ENCODE measurements at regions of chr1 and their contacts with region 1.

Region 1: DNA sequence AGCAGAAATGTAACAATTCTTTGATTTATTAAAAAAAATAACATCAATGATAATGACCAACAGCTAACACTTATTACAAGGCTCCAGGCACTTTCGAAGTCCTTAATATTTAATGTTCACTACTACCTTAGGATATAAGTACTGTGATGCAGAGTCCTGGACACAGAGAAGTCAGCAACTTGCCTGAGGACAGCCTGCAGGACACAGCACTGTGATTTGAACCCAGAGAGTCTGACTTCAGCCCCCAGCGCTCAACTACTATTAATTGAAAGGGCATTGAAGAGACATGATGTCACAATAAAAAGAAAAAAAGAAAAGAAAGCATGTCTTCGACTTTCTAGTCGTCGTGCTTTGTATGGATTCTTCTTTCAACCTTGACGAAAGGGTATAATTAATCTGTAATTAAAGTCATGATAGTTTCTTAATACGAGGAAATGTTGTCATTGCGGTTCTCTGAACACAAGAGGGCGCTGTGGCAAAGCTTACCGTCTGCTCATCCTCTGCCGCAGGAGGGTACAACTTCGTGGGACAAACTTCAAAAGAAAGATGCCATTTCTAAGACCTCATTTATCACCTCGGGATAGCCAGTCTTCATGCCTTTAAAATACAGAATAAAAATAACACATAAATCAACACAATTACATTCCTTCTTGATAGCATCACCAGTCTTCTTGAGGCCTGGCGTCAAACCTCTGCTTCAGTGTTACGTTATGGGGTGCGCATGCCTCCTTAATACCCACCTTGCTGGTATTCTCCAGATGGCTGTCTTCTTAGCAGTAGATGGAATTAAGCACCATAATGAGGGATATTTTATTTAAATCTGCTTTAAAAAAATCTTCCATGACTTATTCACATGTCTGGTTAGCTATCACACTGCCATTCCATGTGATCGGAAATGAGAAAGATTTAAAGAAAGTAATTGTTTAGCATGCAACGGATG is 240.1 kb downstream of the DISC1 start:
- DNase-seq: peak; percentile 38 to 52
- ATAC-seq: peak; percentile 64 to 74; a peak in 5 of 6 replicates
- H3K4me3 ChIP-seq: no peak overlapping the region
- H3K27ac ChIP-seq: peak overlapping the region in 1 of 2 experiments; percentile 38; a peak in 2 of 6 replicates
- H3K4me1 ChIP-seq: no peaks in the 10 kb centered on the region
- CTCF ChIP-seq: peak; percentile 96
- EP300 ChIP-seq: no peak
- POLR2A ChIP-seq: no peak
- RAD21 ChIP-seq: peak; percentile 90 to 93

Region 2: DNA sequence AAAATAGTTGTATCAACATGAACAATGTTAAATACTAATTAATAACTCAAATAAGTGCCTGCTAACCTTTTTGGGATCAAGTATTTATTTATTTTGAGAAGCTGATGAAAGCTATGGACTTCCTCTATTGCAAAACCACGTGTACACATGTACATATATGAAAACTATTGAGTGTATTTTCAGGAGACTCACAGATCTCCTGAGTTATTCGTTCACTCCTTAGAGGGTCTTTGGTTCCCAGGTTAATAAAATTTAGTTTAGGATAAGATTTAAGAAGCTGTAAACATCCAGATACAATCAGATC is 109.6 kb before region 1 on chr1:
- CTCF ChIA-PET with region 1: interaction called, 34 read pairs
- POLR2A ChIA-PET with region 1: no interaction called
- DNase-seq: no peak
- ATAC-seq: peak; percentile 70 to 71; a peak in 4 of 6 replicates
- H3K4me3 ChIP-seq: no peak overlapping the region
- H3K27ac ChIP-seq: peak overlapping the region; percentile 36 to 51; a peak in 4 of 6 replicates
- H3K4me1 ChIP-seq: peaks cover 3% of the 10 kb centered on the region; the same call in 1 of the 3 replicates
- CTCF ChIP-seq: no peak
- EP300 ChIP-seq: no peak
- POLR2A ChIP-seq: no peak
- RAD21 ChIP-seq: peak in 1 of 2 experiments; percentile 1; a peak in 1 of 5 replicates

Region 3: DNA sequence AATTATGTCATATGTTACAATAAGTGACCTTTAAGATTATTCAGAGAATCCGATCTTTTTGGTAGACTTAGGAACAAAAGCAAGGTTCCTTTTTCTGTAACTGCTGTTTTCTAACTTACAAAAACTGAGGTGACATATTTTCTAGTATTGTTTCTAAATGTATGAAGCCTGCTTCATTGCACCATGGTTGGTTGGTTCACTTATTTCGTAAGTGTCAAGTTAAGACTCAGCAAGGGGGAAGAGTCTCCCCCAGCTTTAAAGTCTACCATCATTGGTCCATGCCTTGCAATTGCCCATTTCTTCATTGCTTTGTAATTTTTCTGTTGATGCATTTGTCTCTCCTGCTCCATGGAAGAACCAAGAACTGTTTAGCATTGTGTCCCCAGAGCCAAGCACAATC is 103.2 kb before region 1 on chr1:
- CTCF ChIA-PET with region 1: interaction called, 10 read pairs
- POLR2A ChIA-PET with region 1: no interaction called
- DNase-seq: no peak
- ATAC-seq: no peak
- H3K4me3 ChIP-seq: no peak overlapping the region
- H3K27ac ChIP-seq: no peak overlapping the region
- H3K4me1 ChIP-seq: no peaks in the 10 kb centered on the region
- CTCF ChIP-seq: no peak
- EP300 ChIP-seq: no peak
- POLR2A ChIP-seq: no peak
- RAD21 ChIP-seq: no peak

Region 4: GRCh38 chr1:231844986-231845502 is 21.6 kb before region 1 on chr1:
- CTCF ChIA-PET with region 1: interaction called, 15 read pairs
- POLR2A ChIA-PET with region 1: no interaction called
- DNase-seq: no peak
- ATAC-seq: no peak
- H3K4me3 ChIP-seq: no peak overlapping the region
- H3K27ac ChIP-seq: peak overlapping the region in 1 of 2 experiments; percentile 19; a peak in 1 of 6 replicates
- H3K4me1 ChIP-seq: peaks cover 28% of the 10 kb centered on the region
- CTCF ChIP-seq: 0 out of 3 replicates have a peak, but pooled peaks have one; percentile 8
- EP300 ChIP-seq: no peak
- POLR2A ChIP-seq: no peak
- RAD21 ChIP-seq: no peak

Region 5: DNA sequence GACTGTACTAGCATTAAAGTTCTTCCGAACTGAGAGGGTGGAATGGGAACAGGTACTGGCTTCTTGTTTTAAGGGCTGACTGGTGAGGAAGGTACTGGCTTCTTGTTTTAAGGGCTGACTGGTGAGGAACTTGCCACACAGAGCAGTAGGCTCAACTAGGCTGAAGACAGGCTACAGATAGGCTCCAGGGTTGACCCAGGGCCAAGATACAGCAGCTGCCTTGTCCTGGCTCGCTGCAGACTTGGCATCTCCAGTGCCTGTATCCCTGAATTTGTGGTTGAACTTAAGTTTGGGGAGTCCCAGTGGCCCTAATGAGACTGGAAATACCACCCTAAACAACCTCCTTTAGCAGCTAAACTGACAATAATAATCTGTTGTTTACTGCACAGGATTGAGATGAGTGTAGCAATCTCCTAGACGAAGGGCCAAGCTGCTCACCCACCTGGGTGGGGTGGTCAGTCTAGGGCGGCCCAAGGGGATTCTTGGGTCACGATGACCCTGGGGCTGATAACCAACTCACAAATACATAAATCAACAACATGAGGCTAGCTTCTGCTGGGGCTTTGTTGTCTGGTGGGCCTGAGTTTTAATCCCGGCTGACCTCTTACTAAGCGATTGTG is 13.0 kb before region 1 on chr1:
- CTCF ChIA-PET with region 1: interaction called, 22 read pairs
- POLR2A ChIA-PET with region 1: no interaction called
- DNase-seq: no peak
- ATAC-seq: peak in 1 of 2 experiments; percentile 30; a peak in 1 of 6 replicates
- H3K4me3 ChIP-seq: no peak overlapping the region
- H3K27ac ChIP-seq: no peak overlapping the region
- H3K4me1 ChIP-seq: no peaks in the 10 kb centered on the region
- CTCF ChIP-seq: no peak
- EP300 ChIP-seq: no peak
- POLR2A ChIP-seq: no peak
- RAD21 ChIP-seq: no peak

Region 6: DNA sequence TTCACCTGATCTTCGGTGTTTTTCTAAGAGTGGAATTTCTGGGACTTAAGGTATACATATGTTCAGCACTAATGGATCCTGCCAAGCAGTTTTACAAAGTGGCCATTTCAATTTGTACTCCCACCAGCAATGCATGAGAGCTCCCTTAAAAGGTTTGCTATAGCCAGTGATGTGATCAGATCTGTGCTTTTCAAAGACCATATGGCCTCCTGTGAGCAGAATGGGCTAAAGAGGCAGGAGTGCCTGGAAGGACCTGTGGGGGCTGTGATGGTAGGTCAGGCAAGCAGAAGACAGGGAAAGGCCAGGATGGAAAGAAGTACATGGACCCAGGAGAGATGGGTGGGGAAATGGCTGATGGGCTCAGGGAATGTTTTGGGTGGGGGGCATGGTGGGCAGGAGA is 12.6 kb after region 1 on chr1:
- CTCF ChIA-PET with region 1: interaction called, 24 read pairs
- POLR2A ChIA-PET with region 1: no interaction called
- DNase-seq: no peak
- ATAC-seq: no peak
- H3K4me3 ChIP-seq: no peak overlapping the region
- H3K27ac ChIP-seq: no peak overlapping the region
- H3K4me1 ChIP-seq: no peaks in the 10 kb centered on the region
- CTCF ChIP-seq: no peak
- EP300 ChIP-seq: no peak
- POLR2A ChIP-seq: no peak
- RAD21 ChIP-seq: no peak

Region 7: GRCh38 chr1:232630047-232630893 is 763.6 kb after region 1 on chr1 and contains the start of gene SIPA1L2:
- CTCF ChIA-PET with region 1: interaction called, 65 read pairs
- POLR2A ChIA-PET with region 1: interaction called, 7 read pairs
- DNase-seq: peak; percentile 92 to 97
- ATAC-seq: peak; percentile 90 to 96
- H3K4me3 ChIP-seq: peak within 1 kb of the TSS; percentile 75
- H3K27ac ChIP-seq: peak within 1 kb of the TSS; percentile 88 to 96
- H3K4me1 ChIP-seq: peaks cover 16% of the 10 kb centered on the region; the same call in 2 of the 3 replicates
- CTCF ChIP-seq: peak; percentile 75
- EP300 ChIP-seq: no peak
- POLR2A ChIP-seq: peak; percentile 49
- RAD21 ChIP-seq: peak; percentile 89 to 92
- polyA plus RNA-seq, gene SIPA1L2: 16.4 and 16.9 TPM in 2 replicates